ENCODE measurements at regions of chr1 and their contacts with region 1.

Region 1: GRCh38 chr1:11478571-11479374 is at the start of gene DISP3:
- DNase-seq: peak; percentile 50
- H3K4me3 Mint-ChIP-seq: no peak within 1 kb of the TSS
- H3K27ac Mint-ChIP-seq: no peak within 1 kb of the TSS
- H3K4me1 Mint-ChIP-seq: peaks cover 5% of the 10 kb centered on the region
- H3K27me3 Mint-ChIP-seq: peaks cover 33% of the 10 kb centered on the region
- total RNA-seq, gene DISP3: 0.41 and 0.44 TPM in 2 replicates

Region 2: DNA sequence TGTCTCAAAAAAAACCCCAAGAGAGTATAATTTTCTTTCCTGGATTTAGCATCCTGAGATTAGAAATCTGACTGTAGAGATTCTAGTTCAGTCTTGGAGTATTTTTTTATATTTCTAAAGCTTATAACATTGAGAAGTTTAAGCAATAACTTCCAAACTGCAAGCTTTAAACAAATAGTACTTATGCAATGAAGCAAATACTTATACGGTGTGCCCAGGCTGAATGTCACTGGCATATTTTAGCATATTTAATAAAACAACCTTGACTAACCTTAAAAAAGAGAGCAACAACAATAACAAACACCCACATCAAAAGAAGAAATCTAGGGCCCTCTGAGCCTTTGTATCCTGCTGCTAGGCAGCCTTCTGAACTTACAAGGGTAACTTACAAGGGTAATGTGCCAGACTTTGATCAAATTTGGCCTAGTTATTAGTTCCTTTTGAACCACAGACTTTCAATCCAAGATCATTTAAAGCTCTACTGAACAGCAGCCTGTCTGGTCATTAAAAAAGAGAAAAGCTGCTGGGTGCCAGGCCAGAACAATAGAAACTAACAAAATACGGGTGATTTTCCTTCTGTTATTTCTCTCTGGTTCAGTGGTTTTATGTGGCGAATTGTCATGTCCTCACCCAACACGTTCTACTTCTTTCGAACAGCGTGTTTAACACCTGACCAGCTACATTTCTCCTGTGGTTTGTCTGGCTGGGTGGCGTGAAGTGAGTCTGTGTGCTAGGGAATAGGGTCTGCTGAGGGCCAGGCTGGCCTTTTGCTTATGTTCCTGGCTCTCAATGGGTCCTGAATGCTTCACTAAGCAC is 232.7 kb before region 1 on chr1:
- intact Hi-C with region 1: no loop called
- DNase-seq: no peak
- H3K4me3 Mint-ChIP-seq: no peak overlapping the region
- H3K27ac Mint-ChIP-seq: no peak overlapping the region
- H3K4me1 Mint-ChIP-seq: no peaks in the 10 kb centered on the region
- H3K27me3 Mint-ChIP-seq: no peaks in the 10 kb centered on the region

Region 3: DNA sequence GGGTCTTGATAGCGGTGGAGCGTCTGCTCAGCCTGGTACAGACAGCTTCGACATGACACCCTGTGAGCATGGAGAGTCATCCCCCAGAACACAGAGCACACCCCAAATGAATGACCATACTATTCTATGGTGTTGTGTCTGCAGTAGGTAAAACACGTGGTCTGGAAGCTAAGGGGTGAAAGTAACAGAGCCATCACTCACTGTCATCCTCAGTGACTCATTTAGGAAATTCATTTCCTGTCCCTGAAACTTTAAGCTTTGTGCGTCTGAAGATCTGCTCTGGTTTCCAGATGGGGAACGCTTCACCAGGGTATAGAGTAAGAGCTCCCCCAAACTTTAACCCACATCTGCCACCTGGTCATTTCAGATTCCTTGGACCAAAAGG is 94.6 kb before region 1 on chr1:
- intact Hi-C with region 1: loop called (anchors 5 kb)
- DNase-seq: no peak
- H3K4me3 Mint-ChIP-seq: peak overlapping the region; percentile 42
- H3K27ac Mint-ChIP-seq: peak overlapping the region; percentile 70
- H3K4me1 Mint-ChIP-seq: peaks cover 16% of the 10 kb centered on the region
- H3K27me3 Mint-ChIP-seq: peaks cover 35% of the 10 kb centered on the region

Region 4: GRCh38 chr1:11634365-11635192 is 155.8 kb after region 1 on chr1:
- intact Hi-C with region 1: loop called (anchors 5 kb)
- DNase-seq: no peak
- H3K4me3 Mint-ChIP-seq: no peak overlapping the region
- H3K27ac Mint-ChIP-seq: no peak overlapping the region
- H3K4me1 Mint-ChIP-seq: no peaks in the 10 kb centered on the region
- H3K27me3 Mint-ChIP-seq: peaks cover 1% of the 10 kb centered on the region

Region 5: GRCh38 chr1:11719313-11720032 is 240.7 kb after region 1 on chr1:
- intact Hi-C with region 1: loop called (anchors 10 kb)
- DNase-seq: peak; percentile 72
- H3K4me3 Mint-ChIP-seq: peak overlapping the region; percentile 81
- H3K27ac Mint-ChIP-seq: peak overlapping the region; percentile 78
- H3K4me1 Mint-ChIP-seq: peaks cover 16% of the 10 kb centered on the region
- H3K27me3 Mint-ChIP-seq: peaks cover 6% of the 10 kb centered on the region

Region 6: DNA sequence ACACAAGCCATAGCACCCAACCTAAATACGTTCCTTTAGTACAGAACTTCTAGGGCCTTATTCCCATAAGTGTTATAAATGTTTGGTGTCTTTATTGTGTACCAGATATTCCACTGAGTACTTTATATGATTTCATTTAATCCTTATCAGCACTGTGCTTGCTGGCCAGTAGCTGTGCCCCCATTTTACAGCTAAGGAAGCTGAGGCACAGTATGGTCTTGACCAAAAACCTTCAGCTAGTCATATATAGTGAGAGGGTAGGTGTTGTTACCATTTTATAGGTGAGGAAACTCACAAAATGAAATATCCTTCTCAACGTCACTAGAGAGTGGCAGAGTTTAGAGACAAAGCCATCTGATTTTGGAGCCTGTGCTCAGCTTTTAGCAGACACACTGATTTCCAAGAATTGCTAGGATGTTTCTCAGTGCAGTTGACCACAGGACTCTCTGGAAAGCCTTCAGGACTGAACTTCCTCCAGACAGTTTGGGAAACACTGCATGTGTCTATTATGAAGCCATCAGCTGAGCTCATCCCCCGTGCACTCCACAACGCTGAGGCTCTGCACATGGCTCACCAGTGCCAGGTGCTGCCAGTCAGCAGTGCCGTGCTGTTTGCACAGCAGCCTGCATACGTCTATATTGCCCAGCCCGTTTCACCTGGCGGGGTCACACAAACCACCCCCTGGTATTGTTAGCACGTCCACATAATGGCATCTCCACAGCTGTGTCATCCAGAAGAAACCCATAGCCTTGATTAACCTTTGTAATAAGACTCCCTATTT is 353.4 kb after region 1 on chr1:
- intact Hi-C with region 1: no loop called
- DNase-seq: no peak
- H3K4me3 Mint-ChIP-seq: no peak overlapping the region
- H3K27ac Mint-ChIP-seq: no peak overlapping the region
- H3K4me1 Mint-ChIP-seq: no peaks in the 10 kb centered on the region
- H3K27me3 Mint-ChIP-seq: no peaks in the 10 kb centered on the region

Measured in activated T-helper 1 cell treated with anti-CD3 and anti-CD28 coated beads, Interleukin-12 subunit alpha, Interleukin-12 subunit beta, Interleukin-2, Interleukin-4 antibody, amounts not matched to agents 30 ng/mL and 10 ng/mL and 1 ng/mL, durations not matched to agents 14 hours and 24 hours and 36 hours (primary cell).